Activated CD4-positive, alpha-beta memory T cell treated with anti-CD3 and anti-CD28 coated beads for 36 hours (primary cell): ENCODE measurements at regions of chr11 and their contacts with region 1.

Region 1: DNA sequence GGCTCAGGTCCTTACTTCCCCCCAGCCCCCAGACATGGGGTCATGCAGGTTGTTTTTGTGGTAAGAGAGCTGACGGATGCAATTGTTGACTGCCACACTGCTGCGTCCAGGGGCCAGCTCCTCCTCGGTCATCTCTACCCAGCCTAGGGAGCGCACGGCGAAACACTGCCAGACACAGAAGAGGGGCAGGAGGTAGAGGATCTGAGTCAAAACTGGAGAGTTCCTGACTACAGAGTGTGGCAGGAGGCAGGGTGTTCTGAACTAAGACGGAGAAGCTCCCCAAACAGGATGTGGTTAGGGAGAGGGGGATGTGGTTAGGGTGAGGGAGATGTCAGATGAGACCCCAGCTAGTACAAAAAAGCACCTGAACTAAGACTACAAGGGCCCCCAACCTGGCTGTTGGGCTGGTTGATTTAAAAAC is 12.3 kb downstream of the SMPD1 start:
- DNase-seq: peak; percentile 88
- H3K4me3 Mint-ChIP-seq: peak overlapping the region; percentile 55
- H3K27ac Mint-ChIP-seq: peak overlapping the region; percentile 90
- H3K4me1 Mint-ChIP-seq: peaks cover 71% of the 10 kb centered on the region
- H3K27me3 Mint-ChIP-seq: no peaks in the 10 kb centered on the region

Region 2: GRCh38 chr11:6413791-6414201 is 11.2 kb after region 1 on chr11:
- CTCF ChIA-PET with region 1: interaction called, 4 read pairs
- POLR2A ChIA-PET with region 1: interaction called, 21 read pairs
- intact Hi-C with region 1: loop called (anchors 1 kb)
- DNase-seq: peak; percentile 84
- H3K4me3 Mint-ChIP-seq: no peak overlapping the region
- H3K27ac Mint-ChIP-seq: no peak overlapping the region
- H3K4me1 Mint-ChIP-seq: peaks cover 15% of the 10 kb centered on the region
- H3K27me3 Mint-ChIP-seq: no peaks in the 10 kb centered on the region

Region 3: DNA sequence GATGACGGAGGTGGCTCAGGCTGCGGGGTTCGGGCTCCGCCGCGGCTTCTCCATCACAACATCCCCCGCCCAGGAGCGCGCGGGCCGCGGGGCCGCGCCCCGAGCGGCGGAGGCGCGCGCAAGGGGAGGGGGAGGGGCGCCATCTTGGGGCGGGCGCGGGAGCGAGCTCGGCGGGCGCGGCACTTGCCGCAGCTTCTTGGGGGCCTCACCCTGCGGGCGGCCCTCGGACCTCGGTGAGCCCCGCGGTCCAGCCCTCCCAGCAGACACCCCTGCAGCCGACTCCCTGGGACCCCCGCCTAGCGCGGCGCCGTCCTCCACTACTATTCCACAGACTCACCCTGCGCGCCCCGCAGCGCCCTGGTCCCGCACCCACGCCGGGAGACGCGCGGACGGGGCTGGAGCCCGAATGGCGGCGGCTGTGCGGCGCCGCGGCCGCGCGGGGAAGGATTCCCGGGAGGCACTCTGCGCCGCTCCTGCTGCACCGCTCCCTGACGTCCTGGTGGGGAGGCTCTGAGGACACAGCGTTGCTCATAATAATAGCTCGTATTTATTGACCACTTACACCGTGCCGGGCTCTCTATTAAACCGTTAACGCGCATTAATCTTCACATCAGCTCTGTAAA is 16.5 kb after region 1 on chr11 and contains the start of gene APBB1:
- CTCF ChIA-PET with region 1: interaction called, 4 read pairs
- POLR2A ChIA-PET with region 1: interaction called, 21 read pairs
- intact Hi-C with region 1: loop called (anchors 1 kb)
- DNase-seq: peak; percentile 78
- H3K4me3 Mint-ChIP-seq: peak within 1 kb of the TSS; percentile 73
- H3K27ac Mint-ChIP-seq: peak within 1 kb of the TSS; percentile 61
- H3K4me1 Mint-ChIP-seq: peaks cover 8% of the 10 kb centered on the region
- H3K27me3 Mint-ChIP-seq: peaks cover 5% of the 10 kb centered on the region
- total RNA-seq, gene APBB1: 51.6 to 55.3 TPM

Region 4: GRCh38 chr11:6586434-6587359 is 184.1 kb after region 1 on chr11:
- CTCF ChIA-PET with region 1: no interaction called
- POLR2A ChIA-PET with region 1: no interaction called
- intact Hi-C with region 1: no loop called
- DNase-seq: no peak
- H3K4me3 Mint-ChIP-seq: no peak overlapping the region
- H3K27ac Mint-ChIP-seq: no peak overlapping the region
- H3K4me1 Mint-ChIP-seq: no peaks in the 10 kb centered on the region
- H3K27me3 Mint-ChIP-seq: no peaks in the 10 kb centered on the region